CD4-positive, alpha-beta memory T cell (primary cell): ENCODE measurements at regions of chr17 and their contacts with region 1.

Region 1: DNA sequence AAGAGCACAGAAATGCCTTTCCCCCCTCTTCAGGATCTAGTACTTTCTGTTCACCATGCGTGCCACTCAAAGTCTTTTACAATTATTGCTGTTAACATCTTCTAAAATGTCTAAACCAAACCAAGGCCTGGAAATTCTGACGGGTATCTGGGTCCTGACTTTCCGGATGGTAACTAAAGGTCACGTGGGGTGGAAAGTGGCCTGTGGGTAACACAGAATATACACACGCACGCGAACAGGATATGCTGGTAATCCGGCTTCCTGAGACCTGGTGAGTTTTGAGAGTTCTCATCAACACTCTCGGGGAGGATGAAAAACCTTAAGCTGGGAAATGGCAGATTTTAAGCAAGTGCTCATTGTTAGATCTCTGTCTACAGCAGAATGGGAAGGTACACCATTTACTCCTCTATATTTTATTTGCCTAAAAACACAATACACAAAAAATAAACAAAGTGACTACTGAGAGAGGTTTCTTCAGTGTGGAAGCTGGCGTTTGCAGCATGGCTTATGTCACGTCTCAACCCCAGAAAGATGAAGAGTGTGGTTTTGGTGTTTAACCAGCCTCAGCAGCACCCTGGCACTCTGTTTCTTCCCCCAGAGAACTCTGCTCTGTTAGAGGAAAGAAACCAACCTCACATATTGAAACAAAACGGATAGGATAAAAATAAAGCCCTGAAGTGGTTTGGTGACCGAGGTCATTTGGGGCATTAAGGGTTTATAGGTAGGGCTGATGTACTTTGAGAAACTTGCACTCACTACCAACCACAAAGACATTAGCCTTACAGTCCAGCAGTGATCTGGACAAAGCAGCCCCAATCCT is 37.3 kb downstream of the SMG6 start:
- DNase-seq: peak; percentile 90 to 97 (median 91)
- H3K4me3 ChIP-seq: peak overlapping the region; percentile 13 to 26
- H3K4me3 Mint-ChIP-seq: peak overlapping the region; percentile 72 to 86 (median 85)
- H3K27ac ChIP-seq: peak overlapping the region; percentile 87
- H3K27ac Mint-ChIP-seq: peak overlapping the region; percentile 98 to 99 (median 99)
- H3K4me1 ChIP-seq: peaks cover 82% of the 10 kb centered on the region
- H3K4me1 Mint-ChIP-seq: peaks cover 52 to 86% (median 73%) of the 10 kb centered on the region in 4 donors
- H3K27me3 ChIP-seq: no peaks in the 10 kb centered on the region
- H3K27me3 Mint-ChIP-seq: no peaks in the 10 kb centered on the region

Region 2: GRCh38 chr17:2157675-2158395 is 108.4 kb before region 1 on chr17:
- CTCF ChIA-PET with region 1: no interaction called
- POLR2A ChIA-PET with region 1: no interaction called
- intact Hi-C with region 1: no loop called
- DNase-seq: no peak
- H3K4me3 ChIP-seq: no peak overlapping the region
- H3K4me3 Mint-ChIP-seq: no peak overlapping the region
- H3K27ac ChIP-seq: no peak overlapping the region
- H3K27ac Mint-ChIP-seq: peak overlapping the region in 2 of 7 donors; percentile 22 to 32
- H3K4me1 ChIP-seq: no peaks in the 10 kb centered on the region
- H3K4me1 Mint-ChIP-seq: peaks cover 0 to 1% (median 0%) of the 10 kb centered on the region in 4 donors
- H3K27me3 ChIP-seq: no peaks in the 10 kb centered on the region
- H3K27me3 Mint-ChIP-seq: no peaks in the 10 kb centered on the region

Region 3: DNA sequence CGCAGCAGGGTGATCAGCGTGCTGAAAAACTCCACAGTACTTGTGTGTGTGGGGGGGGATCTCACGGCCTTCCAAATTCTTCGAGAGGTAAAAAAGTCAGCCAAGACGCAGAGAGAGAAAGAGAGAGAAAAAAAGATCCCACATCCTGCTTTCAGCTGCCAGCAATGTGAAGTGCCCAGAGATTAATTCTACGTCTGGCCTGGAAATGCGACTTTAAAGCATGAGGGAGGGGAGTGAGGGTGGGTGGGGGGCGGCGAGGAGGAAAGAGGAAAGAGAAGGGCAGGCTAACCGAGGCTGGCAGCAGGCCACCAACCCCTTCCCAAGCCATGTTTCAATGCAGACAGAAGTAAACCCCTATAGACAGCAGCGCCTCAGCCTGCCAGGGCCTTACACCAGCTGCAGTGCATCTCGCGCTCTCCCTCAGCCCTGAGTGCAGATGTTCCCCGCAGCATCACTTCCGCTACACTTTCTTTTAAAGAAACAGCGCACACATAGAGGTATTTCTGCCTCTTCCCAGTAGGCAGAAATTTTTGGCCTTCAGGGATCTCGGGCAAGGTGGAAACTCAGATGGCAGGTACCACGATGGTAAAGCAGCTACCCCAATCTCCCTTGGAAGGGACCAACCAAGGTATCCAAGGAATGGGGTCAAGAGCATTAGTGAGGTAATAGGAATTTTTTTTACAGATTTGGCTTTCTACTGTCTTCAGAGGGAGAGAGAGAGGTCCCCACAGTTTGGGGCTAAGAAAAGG is 50.5 kb before region 1 on chr17:
- CTCF ChIA-PET with region 1: interaction called, 3 read pairs
- POLR2A ChIA-PET with region 1: interaction called, 8 read pairs
- intact Hi-C with region 1: loop called (anchors 5 kb)
- DNase-seq: peak; percentile 70 to 80 (median 78)
- H3K4me3 ChIP-seq: peak overlapping the region; percentile 37 to 45
- H3K4me3 Mint-ChIP-seq: peak overlapping the region; percentile 74 to 87 (median 80)
- H3K27ac ChIP-seq: peak overlapping the region; percentile 90
- H3K27ac Mint-ChIP-seq: peak overlapping the region; percentile 88 to 99 (median 96)
- H3K4me1 ChIP-seq: peaks cover 52% of the 10 kb centered on the region
- H3K4me1 Mint-ChIP-seq: peaks cover 43 to 63% (median 48%) of the 10 kb centered on the region in 4 donors
- H3K27me3 ChIP-seq: no peaks in the 10 kb centered on the region
- H3K27me3 Mint-ChIP-seq: no peaks in the 10 kb centered on the region

Region 4: DNA sequence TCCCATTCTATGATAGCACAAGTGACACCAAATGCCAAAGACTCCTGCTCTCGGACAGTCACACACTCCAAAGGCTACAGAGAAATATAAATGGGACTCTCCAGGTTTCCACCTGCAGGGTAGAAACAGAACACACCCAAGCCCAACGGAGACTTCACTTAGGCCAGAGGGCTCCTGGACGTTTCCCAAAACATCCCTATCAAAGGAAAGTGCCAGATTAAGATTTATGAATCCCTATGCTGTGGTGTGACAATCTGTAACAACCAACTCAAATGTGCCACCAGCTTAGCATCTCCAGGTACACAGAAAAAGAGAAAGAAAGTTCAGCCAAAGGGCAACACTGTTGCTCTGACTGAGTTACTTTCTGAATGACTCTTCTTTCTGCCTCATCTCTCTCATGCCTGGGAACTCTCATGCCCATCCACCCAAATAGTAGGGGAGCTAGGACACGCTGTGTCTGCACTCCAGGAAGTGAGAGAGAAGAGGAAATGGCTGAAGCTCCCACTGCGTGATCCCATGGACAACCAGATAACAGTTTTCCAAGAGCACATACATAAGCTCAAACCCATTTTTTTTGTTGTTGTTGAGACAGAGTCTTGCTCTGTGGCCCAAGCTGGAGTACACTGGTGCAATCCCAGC is 12.4 kb before region 1 on chr17:
- CTCF ChIA-PET with region 1: interaction called, 20 read pairs
- POLR2A ChIA-PET with region 1: interaction called, 72 read pairs
- intact Hi-C with region 1: no loop called
- DNase-seq: peak in 1 of 5 donors; percentile 18
- H3K4me3 ChIP-seq: no peak overlapping the region
- H3K4me3 Mint-ChIP-seq: peak overlapping the region in 3 of 8 donors; percentile 24 to 61 (median 57)
- H3K27ac ChIP-seq: no peak overlapping the region
- H3K27ac Mint-ChIP-seq: peak overlapping the region; percentile 43 to 87 (median 82)
- H3K4me1 ChIP-seq: peaks cover 26% of the 10 kb centered on the region
- H3K4me1 Mint-ChIP-seq: peaks cover 25 to 61% (median 37%) of the 10 kb centered on the region in 4 donors
- H3K27me3 ChIP-seq: no peaks in the 10 kb centered on the region
- H3K27me3 Mint-ChIP-seq: no peaks in the 10 kb centered on the region

Region 5: DNA sequence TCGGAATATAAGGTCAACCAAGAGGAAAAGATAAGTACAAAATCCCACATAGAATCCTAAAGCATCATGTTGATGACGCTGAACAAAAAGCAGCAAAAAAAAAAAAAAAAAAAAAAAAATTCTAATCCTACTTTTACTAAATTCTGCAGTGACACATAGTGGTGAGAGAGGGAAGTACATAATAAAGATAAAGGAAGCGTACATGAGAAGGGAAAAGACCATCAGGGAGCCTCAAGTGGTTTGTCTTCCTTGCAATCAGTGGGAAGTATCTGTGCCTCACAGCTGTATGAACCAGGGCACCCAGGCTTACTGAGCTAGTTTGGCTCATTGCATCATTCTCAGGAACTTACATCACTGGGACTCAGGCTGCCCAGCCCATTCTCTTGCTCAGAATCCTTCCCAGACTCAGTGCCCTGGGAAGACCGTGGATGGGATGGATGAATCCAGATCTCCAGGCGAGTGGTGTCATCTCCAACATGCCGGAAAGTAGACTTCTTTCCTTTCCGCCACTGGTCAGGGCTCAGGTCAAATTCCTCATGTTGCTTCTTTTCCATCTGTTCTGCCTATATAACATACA is 16.1 kb after region 1 on chr17:
- CTCF ChIA-PET with region 1: interaction called, 21 read pairs
- POLR2A ChIA-PET with region 1: interaction called, 58 read pairs
- intact Hi-C with region 1: loop called (anchors 1 kb)
- DNase-seq: peak in 4 of 5 donors; percentile 52 to 66 (median 58)
- H3K4me3 ChIP-seq: no peak overlapping the region
- H3K4me3 Mint-ChIP-seq: no peak overlapping the region
- H3K27ac ChIP-seq: no peak overlapping the region
- H3K27ac Mint-ChIP-seq: peak overlapping the region; percentile 8 to 88 (median 84)
- H3K4me1 ChIP-seq: peaks cover 8% of the 10 kb centered on the region
- H3K4me1 Mint-ChIP-seq: peaks cover 1 to 18% (median 15%) of the 10 kb centered on the region in 4 donors
- H3K27me3 ChIP-seq: no peaks in the 10 kb centered on the region
- H3K27me3 Mint-ChIP-seq: no peaks in the 10 kb centered on the region

Region 6: GRCh38 chr17:2336215-2336851 is 70.1 kb after region 1 on chr17 and contains the start of gene TSR1:
- CTCF ChIA-PET with region 1: no interaction called
- POLR2A ChIA-PET with region 1: interaction called, 16 read pairs
- intact Hi-C with region 1: no loop called
- DNase-seq: peak; percentile 86 to 88 (median 87)
- H3K4me3 ChIP-seq: peak within 1 kb of the TSS; percentile 94 to 97
- H3K4me3 Mint-ChIP-seq: peak within 1 kb of the TSS; percentile 97 to 100 (median 99)
- H3K27ac ChIP-seq: peak within 1 kb of the TSS; percentile 70
- H3K27ac Mint-ChIP-seq: peak within 1 kb of the TSS; percentile 93 to 98 (median 96)
- H3K4me1 ChIP-seq: peaks cover 20% of the 10 kb centered on the region
- H3K4me1 Mint-ChIP-seq: peaks cover 18 to 34% (median 26%) of the 10 kb centered on the region in 4 donors
- H3K27me3 ChIP-seq: no peaks in the 10 kb centered on the region
- H3K27me3 Mint-ChIP-seq: no peaks in the 10 kb centered on the region
- total RNA-seq, gene TSR1: 22.6 to 31.7 TPM